ENCODE measurements at regions of chr11 and their contacts with region 1.

Region 1: GRCh38 chr11:3786781-3787428 is 10.4 kb downstream of the NUP98 start:
- DNase-seq: no peak
- H3K4me3 ChIP-seq: no peak overlapping the region
- H3K27ac ChIP-seq: no peak overlapping the region
- H3K4me1 ChIP-seq: no peaks in the 10 kb centered on the region
- H3K27me3 ChIP-seq: no peaks in the 10 kb centered on the region
- CTCF ChIP-seq: no peak

Region 2: DNA sequence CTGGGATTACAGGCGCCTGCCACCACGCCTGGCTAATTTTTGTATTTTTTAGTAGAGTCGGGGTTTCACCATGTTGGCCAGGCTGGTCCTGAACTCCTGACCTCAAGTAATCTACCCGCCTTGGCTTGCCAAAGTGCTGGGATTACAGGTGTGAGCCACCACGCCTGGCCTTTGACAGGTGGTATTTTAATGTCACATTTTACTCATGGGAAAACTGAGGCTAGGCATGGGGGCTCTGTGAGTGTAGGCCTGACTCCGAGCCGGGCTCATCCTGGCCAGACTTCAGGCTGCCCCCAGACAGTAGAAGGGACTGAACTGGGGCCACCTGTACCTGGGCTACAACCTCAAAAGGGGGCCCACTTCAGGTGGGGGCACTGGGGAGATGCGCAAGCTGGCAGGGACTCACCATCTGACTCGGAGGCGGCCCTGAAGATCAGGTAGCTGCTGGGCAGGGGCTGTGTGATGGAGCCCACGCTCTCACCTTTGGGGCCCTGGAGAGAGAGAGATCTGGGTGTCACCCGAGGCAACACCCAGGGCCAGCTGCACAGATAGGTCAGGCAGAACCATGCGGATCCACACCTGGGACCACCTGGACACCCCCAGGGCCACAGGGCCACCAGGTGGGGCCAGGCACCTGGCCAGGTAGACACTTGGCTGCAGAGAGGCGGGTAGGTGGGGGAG is 667.6 kb before region 1 on chr11:
- CTCF ChIA-PET with region 1: no interaction called
- POLR2A ChIA-PET with region 1: interaction called, 14 read pairs
- intact Hi-C with region 1: no loop called
- DNase-seq: no peak
- H3K4me3 ChIP-seq: no peak overlapping the region
- H3K27ac ChIP-seq: no peak overlapping the region
- H3K4me1 ChIP-seq: no peaks in the 10 kb centered on the region
- H3K27me3 ChIP-seq: no peaks in the 10 kb centered on the region
- CTCF ChIP-seq: no peak

Region 3: GRCh38 chr11:3614742-3615171 is 172.1 kb before region 1 on chr11:
- CTCF ChIA-PET with region 1: no interaction called
- POLR2A ChIA-PET with region 1: no interaction called
- intact Hi-C with region 1: no loop called
- DNase-seq: no peak
- H3K4me3 ChIP-seq: no peak overlapping the region
- H3K27ac ChIP-seq: no peak overlapping the region
- H3K4me1 ChIP-seq: no peaks in the 10 kb centered on the region
- H3K27me3 ChIP-seq: no peaks in the 10 kb centered on the region
- CTCF ChIP-seq: no peak

Region 4: GRCh38 chr11:3642071-3642951 is 144.6 kb before region 1 on chr11:
- CTCF ChIA-PET with region 1: no interaction called
- POLR2A ChIA-PET with region 1: no interaction called
- intact Hi-C with region 1: no loop called
- DNase-seq: peak; percentile 74
- H3K4me3 ChIP-seq: peak overlapping the region; percentile 41
- H3K27ac ChIP-seq: no peak overlapping the region
- H3K4me1 ChIP-seq: no peaks in the 10 kb centered on the region
- H3K27me3 ChIP-seq: peaks cover 3% of the 10 kb centered on the region
- CTCF ChIP-seq: no peak

Region 5: GRCh38 chr11:3815845-3816244 is 28.9 kb after region 1 on chr11:
- CTCF ChIA-PET with region 1: no interaction called
- POLR2A ChIA-PET with region 1: interaction called, 17 read pairs
- intact Hi-C with region 1: no loop called
- DNase-seq: no peak
- H3K4me3 ChIP-seq: no peak overlapping the region
- H3K27ac ChIP-seq: no peak overlapping the region
- H3K4me1 ChIP-seq: no peaks in the 10 kb centered on the region
- H3K27me3 ChIP-seq: no peaks in the 10 kb centered on the region
- CTCF ChIP-seq: no peak

Region 6: DNA sequence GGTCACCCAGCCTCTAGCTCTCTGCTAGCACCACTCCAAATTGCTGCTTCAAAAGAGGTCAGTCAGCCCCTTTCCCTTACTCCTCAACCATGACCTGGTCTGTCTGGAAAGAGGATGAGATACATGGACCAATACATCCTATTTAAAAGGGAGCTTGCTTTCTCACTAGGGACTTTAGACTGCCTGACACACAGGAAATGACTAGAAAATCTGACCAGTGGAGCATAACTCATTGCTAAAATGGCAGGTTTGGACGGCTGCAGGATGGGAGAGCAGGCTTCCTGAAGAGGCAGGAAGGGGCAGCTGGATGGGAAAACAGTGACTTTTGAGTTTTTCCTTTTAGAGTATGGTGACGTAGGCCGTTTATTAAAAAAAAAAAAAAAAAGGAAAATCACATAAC is 93.8 kb after region 1 on chr11:
- CTCF ChIA-PET with region 1: no interaction called
- POLR2A ChIA-PET with region 1: no interaction called
- intact Hi-C with region 1: no loop called
- DNase-seq: peak; percentile 34
- H3K4me3 ChIP-seq: no peak overlapping the region
- H3K27ac ChIP-seq: no peak overlapping the region
- H3K4me1 ChIP-seq: peaks cover 9% of the 10 kb centered on the region
- H3K27me3 ChIP-seq: no peaks in the 10 kb centered on the region
- CTCF ChIP-seq: no peak